H1 (cell line): ENCODE measurements at regions of chr21 and their contacts with region 1.

Region 1: DNA sequence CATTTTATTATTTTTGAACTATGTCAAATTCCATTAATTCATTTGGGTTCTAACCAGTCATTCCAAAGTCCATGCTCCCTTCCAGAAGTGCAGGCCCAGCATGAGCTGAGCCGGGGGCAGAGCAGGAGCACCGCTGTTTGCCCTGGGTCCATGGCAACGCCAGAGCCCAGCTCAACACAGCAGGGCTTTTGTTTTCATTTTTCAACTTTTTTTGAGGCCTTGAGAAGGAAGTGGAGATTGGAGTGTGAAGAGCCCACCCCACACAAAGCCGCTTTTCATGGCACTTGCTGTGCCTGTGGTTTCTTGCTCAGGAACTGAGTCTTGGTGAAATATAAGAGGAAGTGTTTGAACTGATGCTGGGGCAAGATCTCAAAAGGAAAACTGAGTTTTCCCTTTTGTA is 13.2 kb upstream of the PRMT2 start:
- DNase-seq: no peak
- H3K4me3 ChIP-seq: no peak overlapping the region
- H3K27ac ChIP-seq: no peak overlapping the region
- H3K4me1 ChIP-seq: no peaks in the 10 kb centered on the region; a peak in 2 of 7 replicates
- H3K27me3 ChIP-seq: no peaks in the 10 kb centered on the region
- CTCF ChIP-seq: no peak
- EP300 ChIP-seq: no peak
- POLR2A ChIP-seq: no peak
- RAD21 ChIP-seq: no peak

Region 2: DNA sequence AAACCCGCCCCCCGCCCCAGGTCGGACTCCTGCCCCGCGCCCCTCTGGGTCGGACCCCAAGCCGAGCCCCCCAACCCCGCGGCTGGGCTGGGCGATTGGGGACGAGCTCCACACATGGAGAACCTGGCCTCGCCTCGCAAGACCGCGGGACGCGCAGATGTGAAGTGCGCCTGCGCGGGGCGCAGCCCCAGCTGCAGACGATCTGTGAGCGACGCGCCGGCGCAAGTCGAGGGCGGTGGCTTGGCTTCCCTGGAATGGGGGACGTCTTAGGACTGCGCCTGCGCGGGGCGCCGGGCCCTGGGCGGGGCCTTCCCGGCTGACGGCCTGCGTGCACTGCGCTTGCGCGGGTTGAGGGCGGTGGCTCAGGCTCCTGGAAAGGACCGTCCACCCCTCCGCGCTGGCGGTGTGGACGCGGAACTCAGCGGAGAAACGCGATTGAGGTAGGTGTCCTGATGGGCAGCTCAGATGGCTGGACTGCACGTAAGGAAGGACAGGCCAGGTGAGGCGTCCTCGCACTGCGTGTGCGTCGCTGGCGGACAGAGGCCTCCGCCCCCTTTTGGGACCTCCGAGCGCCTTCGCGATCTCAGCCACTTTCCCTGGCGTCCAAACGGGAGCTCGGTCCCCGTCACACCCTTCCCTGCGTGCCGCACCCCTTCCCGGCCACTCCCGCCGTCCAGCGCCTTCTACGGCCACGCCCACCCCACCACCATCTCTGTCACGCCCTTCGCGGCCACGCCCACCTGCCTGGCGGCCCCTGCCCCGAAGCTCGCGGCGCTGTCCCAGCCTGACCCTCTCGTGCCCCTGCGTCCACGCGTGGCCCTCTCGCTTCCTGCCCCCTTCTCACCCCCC is 13.3 kb after region 1 on chr21 and contains the start of gene PRMT2:
- CTCF ChIA-PET with region 1: interaction called, 11 read pairs
- POLR2A ChIA-PET with region 1: interaction called, 18 read pairs
- DNase-seq: peak; percentile 93 to 99
- H3K4me3 ChIP-seq: peak within 1 kb of the TSS; percentile 80 to 98 (median 88)
- H3K27ac ChIP-seq: peak within 1 kb of the TSS; percentile 89
- H3K4me1 ChIP-seq: peaks cover 0 to 8% (median 4%) of the 10 kb centered on the region in 4 experiments; a peak in 4 of 7 replicates
- H3K27me3 ChIP-seq: no peaks in the 10 kb centered on the region
- CTCF ChIP-seq: no peak
- EP300 ChIP-seq: no peak
- POLR2A ChIP-seq: peak; percentile 87 to 93
- RAD21 ChIP-seq: no peak
- total RNA-seq, gene PRMT2: 45.8 and 47.2 TPM in 2 replicates